Endothelial cell of umbilical vein (primary cell): ENCODE measurements at regions of chr5 and their contacts with region 1.

Region 1: GRCh38 chr5:127564002-127564769 is 46.7 kb downstream of the PRRC1 start:
- DNase-seq: peak; percentile 67
- H3K4me3 ChIP-seq: no peak overlapping the region
- H3K27ac ChIP-seq: no peak overlapping the region
- H3K4me1 ChIP-seq: no peaks in the 10 kb centered on the region
- H3K27me3 ChIP-seq: peaks cover 21 to 25% of the 10 kb centered on the region in 2 experiments
- CTCF ChIP-seq: peak; percentile 49 to 57
- POLR2A ChIP-seq: no peak

Region 2: DNA sequence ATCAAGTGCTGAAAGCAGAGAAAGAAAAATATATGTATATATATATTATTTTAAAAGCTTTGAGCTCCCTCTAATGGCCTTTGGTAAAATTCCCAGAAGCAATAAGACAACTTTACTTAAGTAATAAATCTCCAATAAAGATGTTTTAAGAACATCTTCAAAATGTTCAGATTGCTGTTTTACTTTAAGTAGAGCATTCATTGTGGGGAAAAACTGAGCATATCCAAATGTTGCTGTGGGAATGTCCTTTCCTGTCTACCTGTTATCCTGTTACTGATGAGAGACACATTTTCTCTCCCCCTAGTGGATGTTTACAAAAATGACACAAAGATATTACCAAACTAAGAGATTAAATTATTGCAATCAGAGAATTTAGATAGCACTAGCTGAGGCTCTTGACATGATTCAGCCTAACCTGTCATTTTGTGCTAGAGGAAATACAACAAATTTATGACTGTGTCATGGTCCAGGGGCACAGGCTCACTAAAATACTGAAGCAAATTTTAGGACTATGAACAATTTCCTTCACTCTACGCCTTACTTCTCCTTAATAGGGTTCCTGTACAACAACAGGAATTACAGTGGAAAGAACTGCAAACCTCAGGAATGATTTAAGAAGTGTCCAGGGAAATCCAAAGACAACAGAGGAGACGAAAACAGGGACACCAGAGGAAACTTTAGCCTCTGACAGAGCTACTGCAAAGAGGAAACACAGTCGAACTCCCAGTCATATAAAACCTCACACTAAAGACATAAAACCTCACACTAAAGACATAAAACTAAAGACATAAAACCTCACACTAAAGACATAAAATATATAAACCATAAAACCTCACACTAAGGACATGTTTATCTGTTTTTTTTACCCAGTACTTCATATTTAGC is 71.1 kb before region 1 on chr5:
- CTCF ChIA-PET with region 1: no interaction called
- POLR2A ChIA-PET with region 1: no interaction called
- dilution Hi-C with region 1: no loop called
- intact Hi-C with region 1: no loop called
- DNase-seq: peak; percentile 78
- H3K4me3 ChIP-seq: no peak overlapping the region
- H3K27ac ChIP-seq: no peak overlapping the region
- H3K4me1 ChIP-seq: no peaks in the 10 kb centered on the region
- H3K27me3 ChIP-seq: peaks cover 6 to 31% of the 10 kb centered on the region in 2 experiments
- CTCF ChIP-seq: peak; percentile 47 to 54
- POLR2A ChIP-seq: no peak

Region 3: DNA sequence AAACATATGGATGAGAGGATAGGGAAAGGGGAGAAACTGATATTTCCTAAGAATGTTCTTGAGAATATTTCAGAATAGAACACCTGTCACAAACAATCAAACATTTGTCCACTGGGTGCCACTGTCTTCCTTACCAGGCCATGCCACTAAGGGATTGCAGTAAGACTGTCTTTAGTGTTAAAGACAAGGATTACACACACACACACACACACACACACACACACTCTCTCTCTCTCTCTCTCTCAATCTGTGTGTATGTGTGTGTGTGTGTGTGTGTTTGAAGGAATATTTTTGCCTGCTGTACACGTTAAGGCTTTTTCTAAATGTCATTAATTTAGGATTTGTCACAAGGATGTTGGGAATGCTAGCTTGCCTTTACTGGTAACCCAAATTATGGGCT is 193.4 kb after region 1 on chr5:
- CTCF ChIA-PET with region 1: interaction called, 13 read pairs
- POLR2A ChIA-PET with region 1: no interaction called
- dilution Hi-C with region 1: no loop called
- intact Hi-C with region 1: loop called (anchors 2 kb)
- DNase-seq: peak; percentile 83
- H3K4me3 ChIP-seq: no peak overlapping the region
- H3K27ac ChIP-seq: no peak overlapping the region
- H3K4me1 ChIP-seq: peaks cover 4% of the 10 kb centered on the region
- H3K27me3 ChIP-seq: no peaks in the 10 kb centered on the region
- CTCF ChIP-seq: peak; percentile 33 to 37
- POLR2A ChIP-seq: no peak

Region 4: DNA sequence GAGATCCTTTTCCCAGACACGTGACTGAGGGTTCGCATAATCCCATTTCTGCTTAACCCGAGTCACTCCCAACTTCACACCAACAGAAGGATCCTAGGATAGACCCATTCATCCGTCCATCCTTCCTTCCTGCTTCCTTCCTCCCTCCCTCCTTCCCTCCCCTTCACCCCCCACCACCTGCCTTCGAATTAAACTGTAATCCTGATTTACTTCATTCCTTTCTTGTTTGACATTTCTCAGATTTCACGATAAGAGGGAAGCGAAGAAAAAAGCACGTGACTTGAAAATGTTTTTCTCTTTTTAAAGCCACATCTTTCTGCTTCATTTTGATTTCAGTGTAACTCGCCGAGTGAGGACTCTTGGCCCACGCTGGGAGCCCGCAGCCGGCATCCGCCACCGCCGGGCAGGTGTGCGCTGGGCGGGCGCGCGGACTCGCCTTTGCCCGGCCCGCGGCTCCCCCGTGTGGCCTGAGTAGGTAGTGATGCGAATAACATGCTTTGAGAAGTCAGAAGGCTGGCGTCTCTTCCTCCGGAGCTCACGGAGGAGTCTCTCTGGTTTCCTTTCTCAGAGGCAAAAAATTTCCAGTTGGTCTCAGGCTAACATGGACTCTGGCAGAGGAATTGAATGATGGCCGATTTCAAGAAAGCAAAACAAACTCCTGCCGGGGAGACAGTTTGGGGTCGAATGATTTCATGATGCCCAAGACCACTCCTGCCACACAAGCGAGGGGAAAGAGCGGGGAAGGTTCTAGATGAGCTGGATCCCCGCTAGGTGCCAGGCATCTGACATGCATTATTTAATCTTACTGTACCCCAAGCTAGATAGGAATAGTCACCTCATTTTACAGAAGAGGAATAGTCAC is 637.1 kb after region 1 on chr5:
- CTCF ChIA-PET with region 1: interaction called, 44 read pairs
- POLR2A ChIA-PET with region 1: no interaction called
- dilution Hi-C with region 1: no loop called
- intact Hi-C with region 1: loop called (anchors 1 kb)
- DNase-seq: peak; percentile 63
- H3K4me3 ChIP-seq: no peak overlapping the region
- H3K27ac ChIP-seq: no peak overlapping the region
- H3K4me1 ChIP-seq: peaks cover 10% of the 10 kb centered on the region
- H3K27me3 ChIP-seq: no peaks in the 10 kb centered on the region
- CTCF ChIP-seq: peak; percentile 79 to 85
- POLR2A ChIP-seq: no peak

Region 5: DNA sequence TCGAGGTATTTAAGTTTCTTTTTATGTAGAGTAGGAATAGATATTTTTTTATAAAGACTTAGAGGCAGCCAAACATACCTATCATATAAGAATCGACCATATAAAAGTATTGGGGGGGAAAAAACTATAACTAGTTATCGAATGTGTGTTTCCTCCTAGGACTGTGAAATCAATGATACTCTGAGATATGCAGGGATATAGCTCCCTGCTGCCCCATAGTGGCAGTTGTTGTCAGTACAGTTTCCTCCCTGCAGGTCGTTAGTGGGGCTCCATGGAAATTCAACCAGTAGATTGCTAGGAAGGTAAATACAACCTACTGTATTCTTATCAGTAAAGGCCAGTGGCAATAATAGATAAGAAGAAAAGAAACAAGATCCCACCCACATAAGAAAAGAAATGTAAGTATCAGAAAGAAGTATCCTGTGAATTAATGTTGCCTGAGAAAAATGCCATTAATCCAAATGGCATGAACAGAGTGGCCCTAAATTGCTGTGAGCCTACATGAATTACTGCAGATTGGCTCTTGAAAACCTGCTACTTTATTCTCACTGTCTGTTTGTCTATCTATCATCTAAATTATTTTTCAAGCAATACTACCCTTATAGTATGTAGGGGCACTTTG is 1110.8 kb after region 1 on chr5:
- CTCF ChIA-PET with region 1: interaction called, 10 read pairs
- POLR2A ChIA-PET with region 1: no interaction called
- dilution Hi-C with region 1: no loop called
- intact Hi-C with region 1: loop called (anchors 5 kb)
- DNase-seq: peak; percentile 63
- H3K4me3 ChIP-seq: no peak overlapping the region
- H3K27ac ChIP-seq: no peak overlapping the region
- H3K4me1 ChIP-seq: no peaks in the 10 kb centered on the region
- H3K27me3 ChIP-seq: no peaks in the 10 kb centered on the region
- CTCF ChIP-seq: peak; percentile 64 to 67
- POLR2A ChIP-seq: no peak